Thyroid gland (tissue), 4 donors: ENCODE measurements at regions of chr7 and their contacts with region 1.

Region 1: DNA sequence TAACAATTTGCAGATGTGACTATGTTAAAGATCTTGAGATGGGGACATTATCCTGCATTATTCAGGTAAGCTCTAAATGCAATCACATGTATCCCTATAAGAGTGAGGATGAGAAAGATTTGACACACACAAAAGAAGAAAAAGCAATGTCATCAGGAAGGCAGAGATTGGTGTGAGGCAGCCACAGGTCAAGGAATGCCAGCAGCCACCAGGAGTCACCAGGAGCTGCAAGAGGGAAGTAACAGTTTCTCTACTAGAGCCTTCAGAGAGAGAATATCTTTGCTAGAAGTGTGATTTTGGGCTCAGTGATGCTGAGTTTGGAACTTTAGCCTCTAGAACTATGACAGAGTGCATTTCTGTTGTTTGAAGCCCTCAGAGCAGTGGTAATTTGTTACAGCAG is 700.3 kb upstream of the SEMA3D start:
- DNase-seq: no peak
- H3K4me3 ChIP-seq: no peak overlapping the region
- H3K27ac ChIP-seq: no peak overlapping the region
- H3K4me1 ChIP-seq: no peaks in the 10 kb centered on the region
- H3K27me3 ChIP-seq: no peaks in the 10 kb centered on the region
- CTCF ChIP-seq: no peak
- POLR2A ChIP-seq: no peak

Region 2: DNA sequence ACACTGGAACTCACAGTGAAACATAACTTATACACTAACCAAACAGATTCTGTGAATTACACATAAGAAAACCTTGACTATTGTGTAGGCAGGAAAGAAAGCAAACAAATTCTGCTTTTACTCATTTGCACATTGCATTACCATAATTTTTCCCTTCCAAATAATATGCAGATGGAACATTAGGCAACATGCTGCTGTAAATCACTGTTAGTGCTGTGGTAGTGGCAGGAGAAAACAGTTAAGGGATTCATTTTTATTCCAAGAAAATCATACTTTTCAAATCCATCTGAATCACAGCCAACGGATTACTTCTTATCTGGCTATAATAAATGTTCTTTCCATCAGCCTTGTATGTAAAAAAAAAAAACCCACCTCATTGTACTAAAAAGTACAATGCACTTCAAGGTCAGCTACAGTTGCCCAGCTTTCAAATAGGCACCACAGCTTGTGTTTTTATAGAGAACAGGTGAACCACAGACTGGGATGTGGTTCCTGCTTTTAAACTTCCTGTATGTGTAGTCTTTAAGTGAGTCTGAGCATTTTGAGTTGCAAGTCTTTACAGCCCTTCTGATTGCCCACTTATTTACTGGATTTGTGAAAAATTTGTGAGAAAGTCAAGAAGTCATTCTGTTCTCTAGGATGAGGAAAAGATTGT is 110.3 kb before region 1 on chr7:
- intact Hi-C with region 1: no loop called
- DNase-seq: no peak
- H3K4me3 ChIP-seq: no peak overlapping the region
- H3K27ac ChIP-seq: no peak overlapping the region
- H3K4me1 ChIP-seq: no peaks in the 10 kb centered on the region
- H3K27me3 ChIP-seq: no peaks in the 10 kb centered on the region
- CTCF ChIP-seq: no peak
- POLR2A ChIP-seq: no peak

Region 3: GRCh38 chr7:86137343-86137742 is 250.2 kb after region 1 on chr7:
- intact Hi-C with region 1: no loop called
- DNase-seq: no peak
- H3K4me3 ChIP-seq: no peak overlapping the region
- H3K27ac ChIP-seq: no peak overlapping the region
- H3K4me1 ChIP-seq: no peaks in the 10 kb centered on the region
- H3K27me3 ChIP-seq: no peaks in the 10 kb centered on the region
- CTCF ChIP-seq: no peak
- POLR2A ChIP-seq: no peak

Region 4: DNA sequence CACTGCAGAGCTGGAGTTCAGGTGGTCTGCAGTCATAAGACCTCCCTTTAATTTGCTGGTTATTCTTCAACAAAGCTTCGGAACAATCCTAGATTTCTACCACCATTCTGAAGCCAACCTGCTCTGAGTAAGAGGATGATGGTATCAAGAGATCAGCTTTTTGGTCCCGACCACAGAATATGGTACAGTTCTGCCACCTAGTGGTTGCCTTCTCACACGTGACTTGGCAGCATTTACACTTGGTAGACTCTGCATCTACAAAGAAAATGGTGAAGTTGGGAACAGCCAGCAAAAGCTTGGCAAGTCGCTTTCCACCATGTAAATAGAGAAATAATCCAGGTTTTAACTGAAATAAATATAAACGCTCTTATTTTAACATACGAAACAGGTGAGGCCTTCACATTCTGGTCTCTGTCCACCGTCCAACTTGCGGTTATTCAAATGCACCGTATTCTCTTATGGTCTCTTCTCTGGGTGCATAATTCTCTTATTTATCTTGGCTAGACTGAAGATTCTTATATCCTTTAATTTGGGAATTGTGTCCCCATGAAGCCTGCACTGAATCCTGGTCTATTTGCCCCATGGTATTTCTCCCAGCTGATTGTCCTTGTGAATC is 582.7 kb after region 1 on chr7:
- intact Hi-C with region 1: loop called (anchors 5 kb)
- DNase-seq: peak; percentile 62 to 69
- H3K4me3 ChIP-seq: no peak overlapping the region
- H3K27ac ChIP-seq: no peak overlapping the region
- H3K4me1 ChIP-seq: peaks cover 0 to 11% of the 10 kb centered on the region in 2 donors
- H3K27me3 ChIP-seq: no peaks in the 10 kb centered on the region
- CTCF ChIP-seq: peak; percentile 42 to 82 (median 64)
- POLR2A ChIP-seq: no peak